Activated naive CD4-positive, alpha-beta T cell treated with anti-CD3 and anti-CD28 coated beads for 36 hours (primary cell): ENCODE measurements at regions of chr3 and their contacts with region 1.

Region 1: GRCh38 chr3:192892981-192893700 is 24.5 kb downstream of the MB21D2 start:
- DNase-seq: peak; percentile 86
- H3K4me3 Mint-ChIP-seq: peak overlapping the region; percentile 26
- H3K27ac Mint-ChIP-seq: peak overlapping the region; percentile 77
- H3K4me1 Mint-ChIP-seq: peaks cover 83% of the 10 kb centered on the region
- H3K27me3 Mint-ChIP-seq: peaks cover 26% of the 10 kb centered on the region

Region 2: GRCh38 chr3:192675958-192676649 is 217.0 kb before region 1 on chr3:
- CTCF ChIA-PET with region 1: no interaction called
- intact Hi-C with region 1: loop called (anchors 1 kb)
- DNase-seq: peak; percentile 8
- H3K4me3 Mint-ChIP-seq: no peak overlapping the region
- H3K27ac Mint-ChIP-seq: peak overlapping the region; percentile 75
- H3K4me1 Mint-ChIP-seq: peaks cover 9% of the 10 kb centered on the region
- H3K27me3 Mint-ChIP-seq: peaks cover 5% of the 10 kb centered on the region

Region 3: DNA sequence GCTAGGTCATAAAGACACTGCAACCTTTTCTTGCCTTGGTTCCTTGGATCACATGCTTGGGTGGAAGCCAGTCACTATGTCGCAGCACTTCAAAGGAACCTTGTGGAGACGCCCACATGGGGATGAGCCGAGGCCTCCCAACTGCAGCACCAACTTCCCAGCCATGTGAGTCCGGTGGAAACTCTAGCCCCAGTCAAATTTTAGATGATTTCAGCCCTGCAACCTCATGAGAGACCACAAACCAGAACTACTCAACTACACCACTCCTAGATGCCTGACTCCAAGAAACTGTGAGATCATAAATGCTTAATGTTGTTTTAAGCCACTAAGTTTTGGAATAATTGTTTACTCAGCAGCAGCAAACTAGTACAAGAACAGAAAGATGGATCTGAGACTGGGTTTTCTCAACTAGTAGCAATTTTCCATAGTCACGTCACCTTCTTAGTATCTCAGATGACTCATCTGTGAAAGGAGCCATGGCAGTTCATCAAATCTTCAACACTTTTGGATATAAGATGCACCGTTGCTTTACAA is 62.0 kb before region 1 on chr3:
- CTCF ChIA-PET with region 1: no interaction called
- intact Hi-C with region 1: loop called (anchors 1 kb)
- DNase-seq: no peak
- H3K4me3 Mint-ChIP-seq: no peak overlapping the region
- H3K27ac Mint-ChIP-seq: no peak overlapping the region
- H3K4me1 Mint-ChIP-seq: peaks cover 26% of the 10 kb centered on the region
- H3K27me3 Mint-ChIP-seq: no peaks in the 10 kb centered on the region

Region 4: GRCh38 chr3:192850451-192850981 is 42.6 kb before region 1 on chr3:
- CTCF ChIA-PET with region 1: interaction called, 3 read pairs
- intact Hi-C with region 1: loop called (anchors 1 kb)
- DNase-seq: peak; percentile 73
- H3K4me3 Mint-ChIP-seq: peak overlapping the region; percentile 22
- H3K27ac Mint-ChIP-seq: peak overlapping the region; percentile 84
- H3K4me1 Mint-ChIP-seq: peaks cover 47% of the 10 kb centered on the region
- H3K27me3 Mint-ChIP-seq: peaks cover 5% of the 10 kb centered on the region

Region 5: GRCh38 chr3:193971261-193971751 is 1078.2 kb after region 1 on chr3:
- CTCF ChIA-PET with region 1: no interaction called
- intact Hi-C with region 1: loop called (anchors 10 kb)
- DNase-seq: peak; percentile 40
- H3K4me3 Mint-ChIP-seq: no peak overlapping the region
- H3K27ac Mint-ChIP-seq: peak overlapping the region; percentile 2
- H3K4me1 Mint-ChIP-seq: peaks cover 18% of the 10 kb centered on the region
- H3K27me3 Mint-ChIP-seq: peaks cover 18% of the 10 kb centered on the region